Cardiac septum (tissue), 1 donor: ENCODE measurements at regions of chr1 and their contacts with region 1.

Region 1: GRCh38 chr1:85612704-85613361 is 32.3 kb downstream of the CCN1 start:
- DNase-seq: no peak

Region 2: GRCh38 chr1:85581802-85582686 is 30.8 kb before region 1 on chr1:
- intact Hi-C with region 1: loop called (anchors 2 kb)
- DNase-seq: no peak

Region 3: GRCh38 chr1:85671166-85671565 is 58.3 kb after region 1 on chr1:
- intact Hi-C with region 1: no loop called
- DNase-seq: no peak

Region 4: GRCh38 chr1:85801520-85801919 is 188.7 kb after region 1 on chr1:
- intact Hi-C with region 1: no loop called
- DNase-seq: no peak